ENCODE measurements at regions of chr19 and their contacts with region 1.

Region 1: GRCh38 chr19:5827891-5828660 is 11.4 kb downstream of the FUT6 start:
- DNase-seq: peak; percentile 95 to 97
- H3K4me3 ChIP-seq: peak overlapping the region; percentile 88
- H3K4me3 Mint-ChIP-seq: peak overlapping the region; percentile 88
- H3K27ac Mint-ChIP-seq: peak overlapping the region; percentile 80
- H3K4me1 ChIP-seq: peaks cover 5% of the 10 kb centered on the region; the same call in 1 of the 2 replicates
- H3K4me1 Mint-ChIP-seq: peaks cover 7% of the 10 kb centered on the region
- H3K27me3 ChIP-seq: no peaks in the 10 kb centered on the region
- H3K27me3 Mint-ChIP-seq: no peaks in the 10 kb centered on the region
- CTCF ChIP-seq: no peak

Region 2: DNA sequence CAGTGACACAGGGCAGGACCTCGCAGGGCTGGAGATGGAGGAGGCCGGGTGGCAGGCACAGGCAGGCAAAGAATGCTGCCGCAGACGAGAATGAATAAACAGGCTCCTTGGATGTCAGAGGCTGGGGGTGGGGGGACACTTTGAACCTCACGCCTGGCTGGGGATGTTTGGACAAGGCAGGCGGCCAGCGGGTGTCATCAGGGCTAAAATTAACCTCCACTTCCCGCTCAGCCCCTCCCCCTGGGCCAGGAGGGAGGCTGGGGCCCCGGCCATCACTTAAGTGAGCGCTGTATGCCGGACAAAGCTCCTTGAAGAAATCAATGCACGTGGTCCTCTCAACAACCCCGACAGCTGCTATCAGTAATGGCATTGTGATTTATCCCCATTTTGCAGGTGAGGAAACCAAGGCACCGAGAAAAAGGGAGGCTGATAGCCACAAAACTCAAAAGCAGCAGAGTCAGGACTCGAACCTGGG is 52.6 kb after region 1 on chr19:
- CTCF ChIA-PET with region 1: no interaction called
- POLR2A ChIA-PET with region 1: interaction called, 10 read pairs
- intact Hi-C with region 1: no loop called
- DNase-seq: peak; percentile 84 to 93
- H3K4me3 ChIP-seq: no peak overlapping the region
- H3K4me3 Mint-ChIP-seq: peak overlapping the region; percentile 37
- H3K27ac Mint-ChIP-seq: no peak overlapping the region
- H3K4me1 ChIP-seq: peaks cover 41% of the 10 kb centered on the region
- H3K4me1 Mint-ChIP-seq: no peaks in the 10 kb centered on the region
- H3K27me3 ChIP-seq: no peaks in the 10 kb centered on the region
- H3K27me3 Mint-ChIP-seq: no peaks in the 10 kb centered on the region
- CTCF ChIP-seq: no peak

Region 3: GRCh38 chr19:5904352-5905113 is 76.5 kb after region 1 on chr19 and contains the start of gene VMAC:
- CTCF ChIA-PET with region 1: interaction called, 18 read pairs
- POLR2A ChIA-PET with region 1: interaction called, 27 read pairs
- intact Hi-C with region 1: loop called (anchors 5 kb)
- DNase-seq: peak; percentile 99 to 100
- H3K4me3 ChIP-seq: peak within 1 kb of the TSS; percentile 86
- H3K4me3 Mint-ChIP-seq: peak within 1 kb of the TSS; percentile 82
- H3K27ac Mint-ChIP-seq: peak within 1 kb of the TSS; percentile 97
- H3K4me1 ChIP-seq: no peaks in the 10 kb centered on the region; the same call in 1 of the 2 replicates
- H3K4me1 Mint-ChIP-seq: no peaks in the 10 kb centered on the region
- H3K27me3 ChIP-seq: no peaks in the 10 kb centered on the region
- H3K27me3 Mint-ChIP-seq: no peaks in the 10 kb centered on the region
- CTCF ChIP-seq: no peak
- total RNA-seq, gene VMAC: 4.7 and 4.8 TPM in 2 replicates

Measured in Caco-2 (cell line).